B cell (primary cell): ENCODE measurements at regions of chr2 and their contacts with region 1.

Region 1: GRCh38 chr2:177164584-177165052 is 48.0 kb upstream of the HNRNPA3 start:
- DNase-seq: peak; percentile 86
- ATAC-seq: peak; percentile 66
- H3K4me3 ChIP-seq: peak overlapping the region; percentile 38 to 71 (median 50)
- H3K4me3 Mint-ChIP-seq: no peak overlapping the region
- H3K27ac ChIP-seq: peak overlapping the region; percentile 81 to 90
- H3K27ac Mint-ChIP-seq: no peak overlapping the region
- H3K4me1 ChIP-seq: peaks cover 19 to 25% of the 10 kb centered on the region in 2 donors
- H3K4me1 Mint-ChIP-seq: peaks cover 22% of the 10 kb centered on the region
- H3K27me3 ChIP-seq: no peaks in the 10 kb centered on the region
- H3K27me3 Mint-ChIP-seq: peaks cover 4% of the 10 kb centered on the region
- CTCF ChIP-seq: peak; percentile 100

Region 2: GRCh38 chr2:177212106-177212890 is 47.7 kb after region 1 on chr2 and contains the start of gene HNRNPA3:
- CTCF ChIA-PET with region 1: interaction called, 41 read pairs
- POLR2A ChIA-PET with region 1: interaction called, 28 read pairs
- intact Hi-C with region 1: loop called (anchors 1 kb)
- DNase-seq: peak; percentile 100
- ATAC-seq: peak; percentile 86
- H3K4me3 ChIP-seq: peak within 1 kb of the TSS; percentile 81 to 97 (median 94)
- H3K4me3 Mint-ChIP-seq: peak within 1 kb of the TSS; percentile 91
- H3K27ac ChIP-seq: peak within 1 kb of the TSS; percentile 99 to 100
- H3K27ac Mint-ChIP-seq: peak within 1 kb of the TSS; percentile 98
- H3K4me1 ChIP-seq: peaks cover 32 to 37% of the 10 kb centered on the region in 2 donors
- H3K4me1 Mint-ChIP-seq: peaks cover 47% of the 10 kb centered on the region
- H3K27me3 ChIP-seq: no peaks in the 10 kb centered on the region
- H3K27me3 Mint-ChIP-seq: no peaks in the 10 kb centered on the region
- CTCF ChIP-seq: no peak
- total RNA-seq, gene HNRNPA3: 197 and 200 TPM in 2 replicates

Region 3: GRCh38 chr2:177263451-177264208 is 99.0 kb after region 1 on chr2:
- CTCF ChIA-PET with region 1: interaction called, 195 read pairs
- POLR2A ChIA-PET with region 1: interaction called, 66 read pairs
- intact Hi-C with region 1: loop called (anchors 1 kb)
- DNase-seq: peak; percentile 98
- ATAC-seq: peak; percentile 48
- H3K4me3 ChIP-seq: peak overlapping the region; percentile 67 to 97 (median 92)
- H3K4me3 Mint-ChIP-seq: peak overlapping the region; percentile 98
- H3K27ac ChIP-seq: peak overlapping the region; percentile 99 to 100
- H3K27ac Mint-ChIP-seq: peak overlapping the region; percentile 98
- H3K4me1 ChIP-seq: peaks cover 34% of the 10 kb centered on the region in 2 donors
- H3K4me1 Mint-ChIP-seq: peaks cover 50% of the 10 kb centered on the region
- H3K27me3 ChIP-seq: no peaks in the 10 kb centered on the region
- H3K27me3 Mint-ChIP-seq: no peaks in the 10 kb centered on the region
- CTCF ChIP-seq: peak; percentile 88

Region 4: GRCh38 chr2:177392373-177393202 is 228.0 kb after region 1 on chr2 and contains the start of gene AGPS:
- CTCF ChIA-PET with region 1: interaction called, 35 read pairs
- POLR2A ChIA-PET with region 1: no interaction called
- intact Hi-C with region 1: no loop called
- DNase-seq: peak; percentile 66
- ATAC-seq: peak; percentile 91
- H3K4me3 ChIP-seq: peak within 1 kb of the TSS; percentile 70 to 83 (median 77)
- H3K4me3 Mint-ChIP-seq: peak within 1 kb of the TSS; percentile 91
- H3K27ac ChIP-seq: peak within 1 kb of the TSS in 1 of 2 donors; percentile 47
- H3K27ac Mint-ChIP-seq: peak within 1 kb of the TSS; percentile 87
- H3K4me1 ChIP-seq: peaks cover 19 to 28% of the 10 kb centered on the region in 2 donors
- H3K4me1 Mint-ChIP-seq: peaks cover 42% of the 10 kb centered on the region
- H3K27me3 ChIP-seq: no peaks in the 10 kb centered on the region
- H3K27me3 Mint-ChIP-seq: no peaks in the 10 kb centered on the region
- CTCF ChIP-seq: no peak
- total RNA-seq, gene AGPS: 23.2 and 25.5 TPM in 2 replicates

Region 5: DNA sequence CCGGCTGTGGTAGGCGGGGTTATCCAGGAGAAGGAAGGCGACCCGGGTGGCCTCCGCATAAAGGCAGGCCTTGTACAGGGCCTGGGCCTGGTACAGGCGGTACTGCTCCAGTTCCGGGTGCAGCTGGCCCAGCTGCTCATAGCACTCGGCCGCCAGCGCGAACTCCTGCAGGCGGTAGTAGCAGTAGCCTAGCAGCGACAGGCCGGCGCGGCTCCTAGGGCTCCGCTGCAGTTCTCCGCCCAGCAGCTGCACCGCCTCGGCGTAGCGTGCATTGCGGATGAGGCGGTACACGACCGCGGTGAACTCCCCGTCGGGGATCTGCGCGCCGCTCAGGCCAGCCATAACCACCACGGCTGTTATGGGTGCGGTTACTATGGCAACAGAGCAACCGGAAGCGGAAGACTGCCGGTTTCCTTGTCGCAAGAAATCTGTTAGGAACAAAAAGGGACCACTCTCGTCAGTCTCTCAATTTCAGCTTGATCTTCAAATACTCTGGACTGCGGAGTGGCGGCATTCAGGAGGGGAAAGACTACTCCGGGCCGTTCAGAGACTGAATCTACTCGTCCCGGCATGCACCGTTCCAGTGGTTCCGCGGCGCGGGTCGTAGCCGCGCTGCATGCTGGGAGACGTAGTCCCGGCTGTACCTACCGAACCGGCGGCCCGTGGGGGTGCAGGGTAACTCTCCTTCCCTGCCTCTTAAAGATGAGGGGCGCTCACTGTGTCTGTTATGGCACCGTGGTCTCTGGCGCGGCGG is 388.0 kb after region 1 on chr2:
- CTCF ChIA-PET with region 1: interaction called, 5 read pairs
- POLR2A ChIA-PET with region 1: no interaction called
- intact Hi-C with region 1: loop called (anchors 2 kb)
- DNase-seq: peak; percentile 98
- ATAC-seq: peak; percentile 92
- H3K4me3 ChIP-seq: peak overlapping the region; percentile 63 to 98 (median 94)
- H3K4me3 Mint-ChIP-seq: peak overlapping the region; percentile 97
- H3K27ac ChIP-seq: peak overlapping the region; percentile 99 to 100
- H3K27ac Mint-ChIP-seq: peak overlapping the region; percentile 100
- H3K4me1 ChIP-seq: peaks cover 9 to 13% of the 10 kb centered on the region in 2 donors
- H3K4me1 Mint-ChIP-seq: peaks cover 19% of the 10 kb centered on the region
- H3K27me3 ChIP-seq: no peaks in the 10 kb centered on the region
- H3K27me3 Mint-ChIP-seq: no peaks in the 10 kb centered on the region
- CTCF ChIP-seq: no peak

Region 6: DNA sequence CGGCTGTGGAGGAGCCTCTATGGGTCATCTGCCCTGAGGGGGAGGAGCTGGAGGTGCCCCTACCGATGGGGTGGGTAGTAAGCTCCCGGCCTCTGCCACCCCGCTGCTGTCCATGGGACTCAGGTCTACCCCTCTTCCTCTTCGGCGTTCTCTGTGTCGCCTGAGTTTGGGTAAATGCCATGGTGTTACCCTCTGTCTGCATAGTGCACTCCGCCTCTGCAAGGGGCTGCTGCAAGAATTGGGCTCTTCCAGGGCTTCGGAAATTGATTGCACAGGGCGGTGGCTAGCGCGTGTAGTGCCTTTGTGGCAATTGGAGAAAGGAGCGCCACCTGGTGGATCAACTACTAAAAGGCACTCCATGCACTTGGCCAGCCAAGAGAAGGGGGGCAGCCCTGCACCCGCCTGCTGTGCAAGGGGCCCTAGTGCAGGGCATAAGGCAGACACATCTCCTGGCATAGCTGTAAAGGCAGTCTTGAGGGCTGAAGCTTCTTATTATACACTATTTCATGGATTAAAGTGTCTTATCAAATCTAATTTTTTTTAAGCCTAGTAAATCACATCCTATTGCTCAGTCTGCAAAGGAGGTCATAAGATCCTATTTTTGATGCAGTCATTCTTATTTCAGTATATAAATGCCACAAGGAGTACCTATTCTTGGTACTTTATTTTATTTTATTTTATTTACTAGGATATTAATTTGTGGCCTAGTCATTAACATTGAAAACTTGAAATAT is 599.1 kb after region 1 on chr2:
- CTCF ChIA-PET with region 1: interaction called, 22 read pairs
- POLR2A ChIA-PET with region 1: no interaction called
- intact Hi-C with region 1: loop called (anchors 1 kb)
- DNase-seq: peak; percentile 80
- ATAC-seq: peak; percentile 97
- H3K4me3 ChIP-seq: peak overlapping the region in 1 of 5 experiments; percentile 19
- H3K4me3 Mint-ChIP-seq: peak overlapping the region; percentile 75
- H3K27ac ChIP-seq: no peak overlapping the region
- H3K27ac Mint-ChIP-seq: no peak overlapping the region
- H3K4me1 ChIP-seq: peaks cover 4 to 5% of the 10 kb centered on the region in 2 donors
- H3K4me1 Mint-ChIP-seq: peaks cover 9% of the 10 kb centered on the region
- H3K27me3 ChIP-seq: peaks cover 0 to 6% (median 0%) of the 10 kb centered on the region in 4 experiments
- H3K27me3 Mint-ChIP-seq: peaks cover 23% of the 10 kb centered on the region
- CTCF ChIP-seq: peak; percentile 93